Heart left ventricle (tissue), 16 donors: ENCODE measurements at regions of chr9 and their contacts with region 1.

Region 1: GRCh38 chr9:136799854-136800657 is 3.9 kb downstream of the CCDC183 start:
- DNase-seq: peak; percentile 76 to 92 (median 86)
- ATAC-seq: peak; percentile 59 to 80 (median 66)
- H3K4me3 ChIP-seq: peak overlapping the region; percentile 11 to 62 (median 48)
- H3K27ac ChIP-seq: peak overlapping the region in 7 of 12 donors; percentile 22 to 52 (median 39)
- H3K4me1 ChIP-seq: peaks cover 4 to 52% (median 33%) of the 10 kb centered on the region in 12 donors
- H3K27me3 ChIP-seq: peaks cover 6 to 55% (median 15%) of the 10 kb centered on the region in 9 donors
- CTCF ChIP-seq: no peak
- POLR2A ChIP-seq: no peak

Region 2: GRCh38 chr9:136840140-136840687 is 40.2 kb after region 1 on chr9:
- intact Hi-C with region 1: loop called in 3 of 10 experiments (anchors 5 to 10 kb)
- DNase-seq: no peak
- ATAC-seq: no peak
- H3K4me3 ChIP-seq: no peak overlapping the region
- H3K27ac ChIP-seq: no peak overlapping the region
- H3K4me1 ChIP-seq: peaks cover 10 to 41% (median 27%) of the 10 kb centered on the region in 12 donors
- H3K27me3 ChIP-seq: peaks cover 0 to 23% (median 9%) of the 10 kb centered on the region in 9 donors
- CTCF ChIP-seq: no peak
- POLR2A ChIP-seq: no peak

Region 3: DNA sequence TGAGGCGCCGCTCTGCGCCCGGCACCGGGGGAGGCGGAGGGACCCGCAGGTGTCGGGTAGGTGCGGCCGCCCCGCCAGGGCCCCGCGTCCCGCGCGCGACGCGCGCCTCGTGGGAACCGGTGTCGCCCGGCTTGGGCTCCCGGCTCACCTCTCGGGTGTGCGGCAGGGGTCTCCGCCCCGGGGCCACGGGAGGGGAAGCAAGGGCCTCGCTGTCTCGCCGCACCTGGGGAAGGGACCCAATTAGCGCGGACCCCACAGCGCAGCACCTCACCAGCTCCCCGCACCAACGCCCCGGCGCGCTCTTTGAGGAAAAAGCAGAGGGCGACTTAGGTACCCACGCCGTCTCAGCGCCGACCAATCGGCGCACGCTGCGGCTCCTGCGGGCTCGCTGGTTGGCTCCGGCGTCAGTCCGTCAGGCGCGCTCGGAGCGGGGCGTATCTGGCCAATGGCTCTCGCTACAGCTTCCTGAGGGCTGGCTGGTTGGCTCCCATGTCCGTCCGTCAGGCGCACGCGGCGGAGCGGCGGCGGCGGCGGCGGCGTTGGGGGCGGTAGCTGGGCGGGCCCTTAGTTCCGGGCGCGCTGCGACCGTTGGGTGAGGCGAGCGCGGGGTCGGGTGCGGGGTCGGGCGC is 86.0 kb after region 1 on chr9 and contains the start of gene TRAF2:
- intact Hi-C with region 1: no loop called
- DNase-seq: peak; percentile 98 to 99 (median 99)
- ATAC-seq: peak; percentile 98 to 99 (median 98)
- H3K4me3 ChIP-seq: peak within 1 kb of the TSS; percentile 73 to 93 (median 84)
- H3K27ac ChIP-seq: peak within 1 kb of the TSS in 11 of 12 donors; percentile 73 to 93 (median 87)
- H3K4me1 ChIP-seq: peaks cover 5 to 56% (median 34%) of the 10 kb centered on the region in 12 donors
- H3K27me3 ChIP-seq: no peaks in the 10 kb centered on the region
- CTCF ChIP-seq: no peak
- POLR2A ChIP-seq: peak in 1 of 2 donors; percentile 85
- total RNA-seq, gene TRAF2: 6.3 to 14.7 (median 9.1) TPM